Activated T-helper 2 cell treated with anti-CD3 and anti-CD28 coated beads, Interferon-gamma antibody, Interleukin-2, Interleukin-4, amounts not matched to agents 10 μg/mL and 5 μg/mL and 100 μg/mL, durations not matched to agents 14 hours and 24 hours and 36 hours (primary cell): ENCODE measurements at regions of chr1 and their contacts with region 1.

Region 1: GRCh38 chr1:168408536-168409242 is 128.0 kb downstream of the TBX19 start:
- DNase-seq: peak; percentile 64
- H3K4me3 Mint-ChIP-seq: peak overlapping the region; percentile 40
- H3K27ac Mint-ChIP-seq: peak overlapping the region; percentile 90
- H3K4me1 Mint-ChIP-seq: peaks cover 48% of the 10 kb centered on the region
- H3K27me3 Mint-ChIP-seq: no peaks in the 10 kb centered on the region

Region 2: GRCh38 chr1:168396940-168397698 is 11.6 kb before region 1 on chr1:
- intact Hi-C with region 1: loop called (anchors 1 kb)
- DNase-seq: no peak
- H3K4me3 Mint-ChIP-seq: no peak overlapping the region
- H3K27ac Mint-ChIP-seq: no peak overlapping the region
- H3K4me1 Mint-ChIP-seq: peaks cover 46% of the 10 kb centered on the region
- H3K27me3 Mint-ChIP-seq: peaks cover 4% of the 10 kb centered on the region